Posterior vena cava (tissue), 2 donors: ENCODE measurements at regions of chr16 and their contacts with region 1.

Region 1: GRCh38 chr16:24820522-24820921 is 25.2 kb upstream of the SLC5A11 start:
- DNase-seq: no peak

Region 2: DNA sequence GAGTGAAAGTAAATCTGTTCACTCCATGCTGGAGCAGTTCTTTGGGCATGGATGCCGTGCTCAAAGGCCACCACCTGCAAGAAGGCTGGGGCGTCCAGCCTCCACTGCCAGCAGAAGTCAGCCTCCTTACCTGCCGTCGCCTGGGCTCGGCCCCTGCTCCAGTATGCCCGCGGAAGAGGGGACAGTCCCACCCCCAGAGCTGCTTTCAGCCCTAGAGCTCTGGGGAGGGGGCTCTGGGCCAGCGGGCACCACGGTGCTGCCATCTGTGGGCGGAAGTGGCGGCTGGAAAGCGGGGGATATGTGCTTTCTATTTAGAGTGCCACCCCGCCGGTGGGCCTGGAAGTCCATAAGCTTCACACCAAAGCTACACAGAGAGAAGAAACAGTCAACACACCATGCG is 118.7 kb after region 1 on chr16:
- intact Hi-C with region 1: loop called in 1 of 2 experiments (anchors 10 kb)
- DNase-seq: no peak